ENCODE measurements at regions of chrX and their contacts with region 1.

Region 1: GRCh38 chrX:15854712-15855567 is at the start of gene AP1S2:
- DNase-seq: peak; percentile 94
- ATAC-seq: peak; percentile 98
- H3K4me3 Mint-ChIP-seq: peak within 1 kb of the TSS; percentile 90
- H3K27ac Mint-ChIP-seq: peak within 1 kb of the TSS; percentile 96
- H3K4me1 Mint-ChIP-seq: peaks cover 20% of the 10 kb centered on the region
- H3K27me3 Mint-ChIP-seq: no peaks in the 10 kb centered on the region
- total RNA-seq, gene AP1S2: 22.3 to 24.5 TPM

Region 2: GRCh38 chrX:14872851-14873675 is 981.9 kb before region 1 on chrX and contains the starts of genes FANCB and MOSPD2:
- CTCF ChIA-PET with region 1: no interaction called
- POLR2A ChIA-PET with region 1: no interaction called
- intact Hi-C with region 1: loop called in 1 of 2 experiments (anchors 10 kb)
- DNase-seq: peak; percentile 95
- ATAC-seq: peak; percentile 96
- H3K4me3 Mint-ChIP-seq: peak within 1 kb of the TSS; percentile 78
- H3K27ac Mint-ChIP-seq: peak within 1 kb of the TSS; percentile 76
- H3K4me1 Mint-ChIP-seq: peaks cover 17% of the 10 kb centered on the region
- H3K27me3 Mint-ChIP-seq: no peaks in the 10 kb centered on the region
- total RNA-seq, gene FANCB: 14.7 to 15.4 TPM
- total RNA-seq, gene MOSPD2: 18.9 to 24.5 TPM

Region 3: DNA sequence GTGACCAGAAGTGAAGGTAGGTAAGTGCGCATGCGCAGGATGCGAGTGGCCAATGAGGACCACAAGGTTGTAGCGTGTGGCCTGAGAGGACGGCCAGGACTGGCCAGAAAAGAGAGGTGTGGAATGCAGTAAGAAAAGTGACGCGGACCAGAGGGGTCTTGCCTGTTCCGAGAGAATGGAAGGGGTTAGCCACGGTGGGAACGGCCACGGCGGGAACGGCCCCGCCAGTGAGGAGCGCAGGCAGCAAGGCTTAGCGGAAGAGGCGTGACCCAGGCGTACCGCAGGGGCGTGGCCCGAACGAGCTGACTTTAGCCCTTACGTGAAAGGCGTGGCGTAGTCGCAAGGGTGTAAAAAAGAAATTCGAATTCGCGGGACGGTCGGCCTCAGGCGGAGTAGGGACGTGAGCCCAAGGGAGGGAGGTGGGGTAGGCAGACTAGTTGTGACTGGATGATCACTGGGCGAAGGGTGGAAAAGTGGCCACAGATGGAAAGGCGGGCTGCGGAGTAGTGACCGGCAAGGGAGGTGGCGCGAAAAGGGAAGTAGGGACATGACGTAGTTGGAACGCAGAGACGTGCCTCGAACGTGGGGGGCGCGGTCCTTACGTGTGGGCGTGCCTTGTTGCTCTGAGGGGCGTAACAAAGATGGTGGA is 180.0 kb before region 1 on chrX:
- CTCF ChIA-PET with region 1: no interaction called
- POLR2A ChIA-PET with region 1: interaction called, 3 read pairs
- intact Hi-C with region 1: loop called (anchors 1 kb)
- DNase-seq: peak; percentile 92
- ATAC-seq: peak; percentile 79
- H3K4me3 Mint-ChIP-seq: no peak overlapping the region
- H3K27ac Mint-ChIP-seq: no peak overlapping the region
- H3K4me1 Mint-ChIP-seq: peaks cover 25% of the 10 kb centered on the region
- H3K27me3 Mint-ChIP-seq: no peaks in the 10 kb centered on the region

Region 4: GRCh38 chrX:15761564-15762191 is 93.3 kb before region 1 on chrX:
- CTCF ChIA-PET with region 1: no interaction called
- POLR2A ChIA-PET with region 1: no interaction called
- intact Hi-C with region 1: loop called in 1 of 2 experiments (anchors 1 kb)
- DNase-seq: peak; percentile 49
- ATAC-seq: peak; percentile 80
- H3K4me3 Mint-ChIP-seq: no peak overlapping the region
- H3K27ac Mint-ChIP-seq: peak overlapping the region; percentile 70
- H3K4me1 Mint-ChIP-seq: peaks cover 38% of the 10 kb centered on the region
- H3K27me3 Mint-ChIP-seq: no peaks in the 10 kb centered on the region

Region 5: GRCh38 chrX:15815779-15816437 is 39.0 kb before region 1 on chrX:
- CTCF ChIA-PET with region 1: no interaction called
- POLR2A ChIA-PET with region 1: interaction called, 4 read pairs
- intact Hi-C with region 1: loop called in 1 of 2 experiments (anchors 1 kb)
- DNase-seq: peak; percentile 34
- ATAC-seq: peak; percentile 79
- H3K4me3 Mint-ChIP-seq: no peak overlapping the region
- H3K27ac Mint-ChIP-seq: no peak overlapping the region
- H3K4me1 Mint-ChIP-seq: peaks cover 40% of the 10 kb centered on the region
- H3K27me3 Mint-ChIP-seq: no peaks in the 10 kb centered on the region

Region 6: DNA sequence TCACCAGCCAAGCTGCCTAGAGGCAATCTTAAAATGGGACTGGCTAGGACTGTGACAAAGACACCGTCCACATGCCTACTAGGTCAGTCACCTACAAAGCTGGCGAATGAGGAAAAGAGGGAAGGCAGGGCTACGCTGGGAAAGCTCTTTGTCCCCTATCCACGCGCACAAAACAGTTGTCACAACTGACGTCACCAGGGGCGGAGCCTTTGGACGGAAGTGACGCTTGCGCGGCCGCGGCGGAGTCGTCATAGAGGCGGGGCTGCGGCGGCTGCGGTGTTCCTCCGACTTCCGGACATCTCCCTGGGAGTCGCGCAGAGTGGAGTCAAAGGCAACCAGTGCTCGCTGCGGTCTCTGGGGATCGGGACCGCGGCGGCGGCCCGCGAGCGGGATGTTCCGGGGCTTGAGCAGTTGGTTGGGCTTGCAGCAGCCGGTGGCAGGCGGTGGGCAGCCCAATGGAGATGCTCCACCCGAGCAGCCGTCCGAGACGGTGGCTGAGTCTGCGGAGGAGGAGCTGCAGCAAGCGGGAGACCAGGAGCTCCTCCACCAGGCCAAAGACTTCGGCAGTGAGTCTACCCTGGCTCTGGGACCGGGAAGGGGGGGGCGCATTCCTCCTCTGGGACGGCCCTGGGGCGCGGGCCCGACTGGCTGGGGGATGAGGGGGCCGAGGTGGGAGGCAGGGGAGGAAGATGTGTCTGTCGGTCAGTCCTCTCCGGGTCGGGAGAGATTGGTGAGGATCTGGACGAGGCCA is 864.6 kb after region 1 on chrX and contains the start of gene SYAP1:
- CTCF ChIA-PET with region 1: no interaction called
- POLR2A ChIA-PET with region 1: no interaction called
- intact Hi-C with region 1: loop called in 1 of 2 experiments (anchors 2 kb)
- DNase-seq: peak; percentile 94
- ATAC-seq: peak; percentile 96
- H3K4me3 Mint-ChIP-seq: peak within 1 kb of the TSS; percentile 74
- H3K27ac Mint-ChIP-seq: peak within 1 kb of the TSS; percentile 88
- H3K4me1 Mint-ChIP-seq: peaks cover 22% of the 10 kb centered on the region
- H3K27me3 Mint-ChIP-seq: no peaks in the 10 kb centered on the region
- total RNA-seq, gene SYAP1: 22.8 to 31.4 TPM

Region 7: GRCh38 chrX:16870095-16870860 is 1015.3 kb after region 1 on chrX and contains the start of gene RBBP7:
- CTCF ChIA-PET with region 1: no interaction called
- POLR2A ChIA-PET with region 1: no interaction called
- intact Hi-C with region 1: loop called in 1 of 2 experiments (anchors 10 kb)
- DNase-seq: peak; percentile 93
- ATAC-seq: peak; percentile 84
- H3K4me3 Mint-ChIP-seq: peak within 1 kb of the TSS; percentile 93
- H3K27ac Mint-ChIP-seq: peak within 1 kb of the TSS; percentile 95
- H3K4me1 Mint-ChIP-seq: peaks cover 24% of the 10 kb centered on the region
- H3K27me3 Mint-ChIP-seq: peaks cover 2% of the 10 kb centered on the region
- total RNA-seq, gene RBBP7: 198 to 238 TPM

Measured in activated CD4-positive, alpha-beta T cell treated with anti-CD3 and anti-CD28 coated beads for 36 hours (primary cell).